ENCODE measurements at regions of chr10 and their contacts with region 1.

Region 1: DNA sequence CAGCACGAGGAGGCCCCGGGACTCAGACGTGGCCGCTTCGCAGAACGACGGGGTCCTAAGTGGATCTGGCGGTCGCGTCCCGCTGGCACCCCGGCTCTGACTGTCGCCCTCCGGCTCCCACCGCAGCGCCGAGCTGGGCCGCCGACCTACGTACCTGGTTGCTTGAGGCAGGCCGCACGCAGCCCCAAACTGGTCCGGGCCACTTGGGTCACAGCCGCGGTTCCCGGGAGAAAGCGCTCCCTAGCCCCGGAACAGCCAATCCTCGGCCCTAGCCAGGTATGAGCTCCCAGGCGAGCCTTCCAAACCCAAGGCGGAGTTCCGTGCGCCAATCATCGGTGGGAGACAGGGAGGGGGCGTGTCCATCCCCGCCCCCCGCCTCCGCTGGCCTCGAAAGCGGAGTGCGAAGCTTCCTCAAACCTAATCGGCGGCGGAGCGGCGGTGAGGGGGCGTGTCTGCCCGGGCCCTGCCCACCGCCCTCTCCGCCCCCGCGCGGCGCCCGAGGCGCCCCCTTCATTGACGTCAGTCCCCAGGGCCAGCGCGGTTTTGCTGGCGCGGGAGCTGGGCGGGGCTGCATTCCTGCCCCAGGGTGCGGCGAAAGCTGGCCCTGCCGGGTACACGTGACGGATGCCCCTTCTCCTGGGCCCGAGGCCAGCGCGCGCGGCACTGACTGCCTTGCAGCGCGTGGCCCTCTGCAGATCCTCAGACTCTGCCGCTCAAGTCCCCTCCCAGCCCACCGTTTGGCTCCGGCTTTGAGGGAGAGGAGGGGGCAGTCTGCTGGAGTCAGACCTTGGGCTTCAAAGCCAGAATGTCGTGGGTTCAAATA is at the start of gene AVPI1:
- DNase-seq: peak; percentile 92
- H3K4me3 ChIP-seq: peak within 1 kb of the TSS; percentile 76
- H3K27me3 ChIP-seq: no peaks in the 10 kb centered on the region
- CTCF ChIP-seq: no peak
- polyA plus RNA-seq, gene AVPI1: 32.4 and 32.7 TPM in 2 replicates

Region 2: DNA sequence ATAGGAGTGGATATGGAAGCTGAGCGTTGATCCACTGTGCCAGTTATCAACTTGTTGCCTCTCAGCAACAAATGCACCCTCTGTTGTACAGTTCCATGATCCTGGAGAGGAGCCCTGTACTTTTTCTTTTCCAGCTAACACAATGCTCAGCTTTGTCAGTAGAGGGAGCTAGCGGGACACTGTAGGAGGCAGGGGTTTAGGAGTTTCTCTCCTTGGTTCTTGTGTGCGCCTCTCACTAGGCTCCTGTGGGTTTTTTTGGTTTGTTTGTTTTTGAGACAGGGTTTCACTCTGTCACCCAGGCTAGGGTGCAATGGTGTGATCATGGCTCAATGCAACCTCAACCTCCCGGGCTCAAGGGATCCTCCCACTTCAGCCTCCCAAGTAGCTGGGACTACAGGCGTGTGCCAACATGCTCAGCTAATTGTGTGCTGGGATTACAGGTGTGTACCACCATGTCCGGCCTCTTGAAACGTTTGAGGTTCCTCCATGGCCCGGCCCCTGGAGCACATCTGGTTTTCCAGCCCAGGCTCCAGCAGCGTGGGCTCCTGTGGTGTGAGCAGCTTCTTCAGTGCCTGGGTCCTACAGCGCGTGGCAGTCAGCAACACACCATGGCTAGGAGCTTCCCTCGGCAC is 14.4 kb after region 1 on chr10:
- CTCF ChIA-PET with region 1: interaction called, 17 read pairs
- POLR2A ChIA-PET with region 1: no interaction called
- DNase-seq: no peak
- H3K4me3 ChIP-seq: no peak overlapping the region
- H3K27me3 ChIP-seq: no peaks in the 10 kb centered on the region; the same call in 1 of the 2 replicates
- CTCF ChIP-seq: peak; percentile 92

Region 3: DNA sequence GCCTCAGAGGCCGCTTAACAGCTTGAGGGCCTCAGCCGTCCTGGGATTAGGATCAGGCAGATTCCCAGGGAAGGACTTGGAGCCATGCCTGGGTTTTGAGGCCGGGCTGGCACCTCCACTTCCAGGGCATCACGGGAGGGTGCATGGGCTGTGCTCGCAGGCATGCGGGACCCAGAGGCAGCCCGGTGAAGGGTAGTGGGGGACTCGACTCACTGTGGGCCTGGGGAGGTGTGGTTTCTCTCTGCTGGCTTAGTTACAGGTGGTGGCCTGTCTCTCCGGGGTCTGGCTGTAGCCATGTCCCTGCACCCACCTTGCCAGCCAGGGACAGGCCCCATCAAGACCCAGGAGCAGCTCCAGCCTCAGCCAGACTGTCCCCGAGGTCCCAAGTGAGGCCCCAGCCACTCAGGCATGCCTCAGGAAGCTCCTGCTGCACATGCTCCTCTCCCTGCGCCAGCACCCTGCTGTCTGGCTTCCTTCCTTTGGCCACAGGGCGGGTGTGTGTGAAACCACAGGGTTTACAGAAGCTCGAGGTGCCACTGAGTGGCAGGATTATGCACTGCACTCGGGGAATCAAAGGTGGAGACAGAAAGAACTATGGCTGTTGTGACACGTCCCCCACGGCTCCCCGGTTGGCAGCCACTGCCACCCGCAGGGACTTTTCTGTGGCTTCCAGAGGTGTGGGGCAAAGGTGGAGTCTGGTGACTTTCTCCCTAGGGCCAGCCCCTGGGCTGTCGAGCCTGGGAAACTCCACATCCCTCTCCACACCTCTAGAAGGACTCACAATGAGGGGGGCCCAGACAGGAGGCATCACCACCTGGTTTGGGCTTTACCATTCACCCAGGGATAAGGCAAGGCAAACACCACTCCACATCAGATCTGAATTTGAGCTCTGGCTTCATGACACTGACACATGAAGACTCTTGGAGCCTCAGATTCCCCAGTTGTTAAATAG is 182.2 kb after region 1 on chr10:
- CTCF ChIA-PET with region 1: no interaction called
- POLR2A ChIA-PET with region 1: no interaction called
- DNase-seq: no peak
- H3K4me3 ChIP-seq: no peak overlapping the region
- H3K27me3 ChIP-seq: peaks cover 26% of the 10 kb centered on the region
- CTCF ChIP-seq: peak; percentile 78